ENCODE measurements at regions of chr9 and their contacts with region 1.

Region 1: GRCh38 chr9:16352791-16353411 is 517.6 kb downstream of the BNC2 start:
- DNase-seq: no peak
- ATAC-seq: no peak
- H3K4me3 ChIP-seq: no peak overlapping the region
- H3K27ac ChIP-seq: no peak overlapping the region
- H3K4me1 ChIP-seq: no peaks in the 10 kb centered on the region
- H3K27me3 ChIP-seq: no peaks in the 10 kb centered on the region

Region 2: GRCh38 chr9:16289639-16290038 is 63.3 kb before region 1 on chr9:
- intact Hi-C with region 1: loop called in 1 of 2 experiments (anchors 2 kb)
- DNase-seq: peak in 1 of 2 donors; percentile 54
- ATAC-seq: no peak
- H3K4me3 ChIP-seq: no peak overlapping the region
- H3K27ac ChIP-seq: no peak overlapping the region
- H3K4me1 ChIP-seq: no peaks in the 10 kb centered on the region
- H3K27me3 ChIP-seq: no peaks in the 10 kb centered on the region

Measured in aorta (tissue), 5 donors.